ENCODE measurements at regions of chr10 and their contacts with region 1.

Region 1: GRCh38 chr10:31836569-31837406 is 91.8 kb downstream of the ARHGAP12 start:
- DNase-seq: peak; percentile 44
- H3K4me3 ChIP-seq: no peak overlapping the region
- H3K27ac ChIP-seq: no peak overlapping the region
- H3K4me1 ChIP-seq: peaks cover 8% of the 10 kb centered on the region
- H3K27me3 ChIP-seq: no peaks in the 10 kb centered on the region
- CTCF ChIP-seq: peak; percentile 65 to 67
- POLR2A ChIP-seq: no peak

Region 2: GRCh38 chr10:32005050-32005449 is 168.3 kb after region 1 on chr10:
- CTCF ChIA-PET with region 1: interaction called, 9 read pairs
- POLR2A ChIA-PET with region 1: no interaction called
- dilution Hi-C with region 1: no loop called
- intact Hi-C with region 1: loop called (anchors 1 kb)
- DNase-seq: peak; percentile 57
- H3K4me3 ChIP-seq: no peak overlapping the region
- H3K27ac ChIP-seq: no peak overlapping the region
- H3K4me1 ChIP-seq: no peaks in the 10 kb centered on the region
- H3K27me3 ChIP-seq: no peaks in the 10 kb centered on the region
- CTCF ChIP-seq: peak; percentile 41 to 55
- POLR2A ChIP-seq: no peak